MCF 10A (cell line): ENCODE measurements at regions of chr6 and their contacts with region 1.

Region 1: GRCh38 chr6:137165375-137166246 is 7.8 kb downstream of the IL22RA2 start:
- DNase-seq: peak; percentile 72
- H3K4me3 Mint-ChIP-seq: no peak overlapping the region
- H3K27ac Mint-ChIP-seq: no peak overlapping the region
- H3K4me1 Mint-ChIP-seq: peaks cover 32% of the 10 kb centered on the region
- H3K27me3 Mint-ChIP-seq: no peaks in the 10 kb centered on the region
- CTCF ChIP-seq: peak; percentile 58

Region 2: GRCh38 chr6:136764517-136764993 is 401.1 kb before region 1 on chr6:
- CTCF ChIA-PET with region 1: no interaction called
- POLR2A ChIA-PET with region 1: no interaction called
- intact Hi-C with region 1: no loop called
- DNase-seq: no peak
- H3K4me3 Mint-ChIP-seq: no peak overlapping the region
- H3K27ac Mint-ChIP-seq: no peak overlapping the region
- H3K4me1 Mint-ChIP-seq: peaks cover 32% of the 10 kb centered on the region
- H3K27me3 Mint-ChIP-seq: no peaks in the 10 kb centered on the region
- CTCF ChIP-seq: no peak

Region 3: GRCh38 chr6:136920671-136921380 is 244.8 kb before region 1 on chr6:
- CTCF ChIA-PET with region 1: no interaction called
- POLR2A ChIA-PET with region 1: no interaction called
- intact Hi-C with region 1: no loop called
- DNase-seq: no peak
- H3K4me3 Mint-ChIP-seq: no peak overlapping the region
- H3K27ac Mint-ChIP-seq: no peak overlapping the region
- H3K4me1 Mint-ChIP-seq: no peaks in the 10 kb centered on the region
- H3K27me3 Mint-ChIP-seq: peaks cover 11% of the 10 kb centered on the region
- CTCF ChIP-seq: no peak

Region 4: DNA sequence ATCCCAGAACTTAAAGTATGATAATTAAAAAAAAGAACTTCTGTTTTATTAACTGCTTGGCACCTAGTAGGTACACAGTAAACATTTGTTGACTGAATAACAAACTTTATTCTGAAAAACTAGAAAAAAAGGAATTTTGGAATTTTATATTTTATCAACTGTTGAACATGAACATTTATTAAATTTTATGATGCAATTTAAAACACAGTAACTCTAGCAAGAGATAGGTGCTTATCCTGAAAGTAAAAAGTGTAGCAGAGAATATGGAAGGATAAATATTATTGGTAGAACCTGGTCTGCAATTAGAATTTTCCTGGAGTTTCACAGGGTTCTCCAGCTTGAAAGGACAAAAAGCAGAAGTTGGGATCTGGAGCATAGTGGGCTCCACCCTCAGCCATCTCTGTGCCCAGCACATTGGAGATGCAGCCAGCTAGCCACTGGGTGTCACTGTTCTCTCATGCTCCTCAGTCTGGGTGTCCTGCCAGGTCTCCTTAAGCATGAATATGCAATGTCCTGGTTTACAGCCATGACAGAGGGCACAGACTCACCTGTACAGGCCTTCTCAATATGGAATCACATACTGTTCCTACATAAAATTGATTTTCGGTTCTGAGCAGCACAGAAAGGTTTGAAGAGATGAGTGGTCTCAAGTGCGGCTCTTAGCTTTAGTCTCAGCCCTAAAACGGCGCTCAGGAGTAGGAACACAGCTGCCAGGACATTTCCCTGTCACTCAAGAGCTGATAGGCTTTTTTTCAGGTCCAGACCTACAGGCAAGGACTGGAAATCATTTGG is 89.1 kb before region 1 on chr6:
- CTCF ChIA-PET with region 1: interaction called, 23 read pairs
- POLR2A ChIA-PET with region 1: no interaction called
- intact Hi-C with region 1: loop called (anchors 1 kb)
- DNase-seq: peak; percentile 86
- H3K4me3 Mint-ChIP-seq: no peak overlapping the region
- H3K27ac Mint-ChIP-seq: no peak overlapping the region
- H3K4me1 Mint-ChIP-seq: no peaks in the 10 kb centered on the region
- H3K27me3 Mint-ChIP-seq: no peaks in the 10 kb centered on the region
- CTCF ChIP-seq: peak; percentile 68

Region 5: DNA sequence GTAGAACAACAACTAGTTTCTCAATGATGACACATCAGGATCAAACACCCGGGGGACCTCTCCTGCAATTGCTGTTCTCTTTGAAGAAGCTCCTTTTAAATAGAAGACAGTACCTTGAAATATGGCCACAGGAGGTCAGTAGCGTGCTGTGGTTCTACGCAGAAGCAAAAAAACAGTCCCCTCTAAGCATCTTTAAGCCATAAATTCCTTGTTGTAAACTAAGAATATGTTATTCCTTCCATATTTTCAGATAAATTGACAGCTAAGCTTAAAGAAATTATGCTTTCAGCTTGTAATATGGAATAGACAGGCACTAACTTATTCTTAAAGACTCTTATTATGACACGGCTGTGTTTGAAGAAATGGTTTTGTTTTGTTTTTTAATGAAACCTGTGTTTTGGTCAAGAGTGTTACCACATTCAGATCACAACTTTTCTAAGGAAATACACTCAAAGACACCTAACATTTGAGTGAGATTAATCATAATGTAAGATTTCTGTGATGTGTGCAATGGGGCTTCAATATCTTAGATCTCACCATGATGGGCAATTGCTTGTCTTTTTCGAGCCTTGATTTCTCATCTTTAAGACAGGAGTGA is 71.1 kb before region 1 on chr6:
- CTCF ChIA-PET with region 1: interaction called, 116 read pairs
- POLR2A ChIA-PET with region 1: interaction called, 40 read pairs
- intact Hi-C with region 1: loop called (anchors 1 kb)
- DNase-seq: peak; percentile 81
- H3K4me3 Mint-ChIP-seq: no peak overlapping the region
- H3K27ac Mint-ChIP-seq: no peak overlapping the region
- H3K4me1 Mint-ChIP-seq: peaks cover 9% of the 10 kb centered on the region
- H3K27me3 Mint-ChIP-seq: no peaks in the 10 kb centered on the region
- CTCF ChIP-seq: peak; percentile 65

Region 6: GRCh38 chr6:137136065-137136464 is 29.5 kb before region 1 on chr6:
- CTCF ChIA-PET with region 1: interaction called, 46 read pairs
- POLR2A ChIA-PET with region 1: interaction called, 6 read pairs
- intact Hi-C with region 1: loop called (anchors 1 kb)
- DNase-seq: peak; percentile 43
- H3K4me3 Mint-ChIP-seq: no peak overlapping the region
- H3K27ac Mint-ChIP-seq: no peak overlapping the region
- H3K4me1 Mint-ChIP-seq: peaks cover 10% of the 10 kb centered on the region
- H3K27me3 Mint-ChIP-seq: no peaks in the 10 kb centered on the region
- CTCF ChIP-seq: peak; percentile 54

Region 7: GRCh38 chr6:137181891-137182653 is 16.5 kb after region 1 on chr6:
- CTCF ChIA-PET with region 1: interaction called, 14 read pairs
- POLR2A ChIA-PET with region 1: no interaction called
- intact Hi-C with region 1: no loop called
- DNase-seq: no peak
- H3K4me3 Mint-ChIP-seq: no peak overlapping the region
- H3K27ac Mint-ChIP-seq: no peak overlapping the region
- H3K4me1 Mint-ChIP-seq: no peaks in the 10 kb centered on the region
- H3K27me3 Mint-ChIP-seq: no peaks in the 10 kb centered on the region
- CTCF ChIP-seq: no peak

Region 8: GRCh38 chr6:137332637-137333280 is 167.1 kb after region 1 on chr6:
- CTCF ChIA-PET with region 1: no interaction called
- POLR2A ChIA-PET with region 1: no interaction called
- intact Hi-C with region 1: no loop called
- DNase-seq: no peak
- H3K4me3 Mint-ChIP-seq: no peak overlapping the region
- H3K27ac Mint-ChIP-seq: no peak overlapping the region
- H3K4me1 Mint-ChIP-seq: no peaks in the 10 kb centered on the region
- H3K27me3 Mint-ChIP-seq: peaks cover 14% of the 10 kb centered on the region
- CTCF ChIP-seq: no peak

Region 9: DNA sequence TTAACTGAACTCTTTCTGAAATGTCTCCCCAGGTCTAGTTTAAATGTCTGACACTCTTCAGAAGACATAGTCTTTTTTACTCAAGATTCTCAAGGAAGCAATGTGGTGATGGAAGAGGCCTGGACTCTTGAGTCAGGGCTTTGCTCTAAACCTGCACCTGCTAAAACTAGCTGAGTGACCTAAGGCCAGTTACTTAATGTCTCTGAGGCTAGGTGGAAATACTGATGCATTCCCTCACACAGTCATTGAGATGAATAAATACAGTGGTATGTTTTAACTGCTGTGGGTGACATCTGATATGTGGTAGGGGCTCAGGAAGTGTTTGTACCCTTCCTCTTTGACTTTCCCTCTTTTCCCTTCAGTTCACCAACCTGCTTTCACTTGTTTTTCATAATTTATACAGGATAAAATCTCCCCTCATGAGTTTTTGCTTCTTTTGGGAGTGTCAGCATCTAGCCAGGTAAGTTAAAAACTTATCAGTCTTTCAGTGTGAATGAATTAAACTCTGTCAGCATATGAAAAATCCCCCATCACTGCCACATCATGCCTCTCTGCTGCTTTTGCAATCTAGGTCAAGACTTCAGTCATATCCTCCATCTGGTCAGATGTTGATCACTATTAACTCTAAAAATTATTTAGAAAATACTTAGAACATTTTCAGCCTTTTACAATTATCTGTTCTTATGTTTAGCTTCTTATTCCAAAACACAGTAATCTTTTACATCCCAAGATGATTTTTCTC is 522.8 kb after region 1 on chr6:
- CTCF ChIA-PET with region 1: no interaction called
- POLR2A ChIA-PET with region 1: no interaction called
- intact Hi-C with region 1: no loop called
- DNase-seq: no peak
- H3K4me3 Mint-ChIP-seq: no peak overlapping the region
- H3K27ac Mint-ChIP-seq: no peak overlapping the region
- H3K4me1 Mint-ChIP-seq: no peaks in the 10 kb centered on the region
- H3K27me3 Mint-ChIP-seq: no peaks in the 10 kb centered on the region
- CTCF ChIP-seq: no peak